ENCODE measurements at regions of chr2 and their contacts with region 1.

Region 1: GRCh38 chr2:20661067-20661980 is 5.6 kb upstream of the GDF7 start:
- DNase-seq: peak; percentile 78
- H3K4me3 Mint-ChIP-seq: no peak overlapping the region
- H3K27ac Mint-ChIP-seq: no peak overlapping the region
- H3K4me1 Mint-ChIP-seq: peaks cover 10% of the 10 kb centered on the region
- H3K27me3 Mint-ChIP-seq: peaks cover 52% of the 10 kb centered on the region

Region 2: DNA sequence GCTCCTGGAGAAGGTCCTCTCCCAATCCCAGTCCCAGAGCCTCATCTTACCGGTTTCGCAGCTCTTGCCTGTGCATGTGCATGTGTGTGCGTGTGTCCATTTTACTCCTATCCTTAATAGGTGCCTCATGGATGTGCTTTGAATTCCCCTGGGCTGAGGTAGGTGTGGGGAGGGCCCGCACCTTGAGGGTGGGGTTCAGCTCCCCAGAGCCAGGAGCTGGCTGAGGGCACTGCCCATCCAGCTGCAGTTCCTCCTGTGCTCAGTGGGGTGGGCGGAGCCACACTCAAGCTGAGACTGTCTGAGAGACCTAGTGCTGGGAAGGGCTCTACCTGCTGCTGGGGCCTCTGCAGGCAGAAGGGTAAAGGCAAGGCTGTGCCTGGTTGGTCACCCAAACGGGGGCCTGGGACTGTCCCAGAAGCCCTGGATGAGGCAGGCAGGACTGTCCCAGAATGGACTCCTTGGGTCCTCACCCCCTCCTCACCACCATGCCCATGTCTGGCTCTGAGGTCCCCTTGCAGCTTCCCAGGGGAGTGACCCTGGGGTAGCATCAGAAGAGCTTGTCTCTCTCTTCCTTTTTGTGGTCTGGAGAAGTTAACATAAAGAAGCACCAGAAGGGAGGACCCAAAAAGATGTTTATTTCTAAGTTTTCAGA is 14.5 kb after region 1 on chr2:
- CTCF ChIA-PET with region 1: interaction called, 47 read pairs
- POLR2A ChIA-PET with region 1: no interaction called
- intact Hi-C with region 1: no loop called
- DNase-seq: peak; percentile 33
- H3K4me3 Mint-ChIP-seq: no peak overlapping the region
- H3K27ac Mint-ChIP-seq: no peak overlapping the region
- H3K4me1 Mint-ChIP-seq: no peaks in the 10 kb centered on the region
- H3K27me3 Mint-ChIP-seq: peaks cover 16% of the 10 kb centered on the region

Region 3: DNA sequence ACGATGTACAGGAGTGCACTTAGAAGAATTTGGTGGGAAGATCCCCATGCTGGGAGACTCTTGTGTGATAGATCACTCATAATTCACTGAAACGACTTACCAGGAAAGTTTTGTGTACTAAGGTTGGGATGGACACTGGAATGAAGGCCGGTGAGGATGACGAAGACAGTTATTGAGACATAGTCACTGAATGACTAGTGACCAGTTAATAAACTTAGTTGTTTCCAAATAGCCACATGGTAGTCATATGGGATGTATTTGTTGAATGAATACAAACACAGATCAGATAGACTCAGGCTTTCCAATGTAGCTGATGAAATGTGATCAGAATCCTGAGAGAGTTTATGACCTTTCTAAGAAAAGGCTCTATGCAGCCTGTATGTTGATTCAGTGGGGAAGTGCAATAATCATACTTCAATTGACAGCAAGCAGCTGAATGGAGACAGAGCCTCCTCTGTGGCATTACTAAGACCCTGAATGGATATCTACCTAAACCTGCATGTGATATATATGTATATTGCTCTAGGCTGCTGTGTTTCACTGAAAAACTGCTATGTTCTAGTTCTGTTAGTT is 26.0 kb after region 1 on chr2:
- CTCF ChIA-PET with region 1: interaction called, 12 read pairs
- POLR2A ChIA-PET with region 1: no interaction called
- intact Hi-C with region 1: no loop called
- DNase-seq: no peak
- H3K4me3 Mint-ChIP-seq: no peak overlapping the region
- H3K27ac Mint-ChIP-seq: no peak overlapping the region
- H3K4me1 Mint-ChIP-seq: peaks cover 11% of the 10 kb centered on the region
- H3K27me3 Mint-ChIP-seq: no peaks in the 10 kb centered on the region

Region 4: DNA sequence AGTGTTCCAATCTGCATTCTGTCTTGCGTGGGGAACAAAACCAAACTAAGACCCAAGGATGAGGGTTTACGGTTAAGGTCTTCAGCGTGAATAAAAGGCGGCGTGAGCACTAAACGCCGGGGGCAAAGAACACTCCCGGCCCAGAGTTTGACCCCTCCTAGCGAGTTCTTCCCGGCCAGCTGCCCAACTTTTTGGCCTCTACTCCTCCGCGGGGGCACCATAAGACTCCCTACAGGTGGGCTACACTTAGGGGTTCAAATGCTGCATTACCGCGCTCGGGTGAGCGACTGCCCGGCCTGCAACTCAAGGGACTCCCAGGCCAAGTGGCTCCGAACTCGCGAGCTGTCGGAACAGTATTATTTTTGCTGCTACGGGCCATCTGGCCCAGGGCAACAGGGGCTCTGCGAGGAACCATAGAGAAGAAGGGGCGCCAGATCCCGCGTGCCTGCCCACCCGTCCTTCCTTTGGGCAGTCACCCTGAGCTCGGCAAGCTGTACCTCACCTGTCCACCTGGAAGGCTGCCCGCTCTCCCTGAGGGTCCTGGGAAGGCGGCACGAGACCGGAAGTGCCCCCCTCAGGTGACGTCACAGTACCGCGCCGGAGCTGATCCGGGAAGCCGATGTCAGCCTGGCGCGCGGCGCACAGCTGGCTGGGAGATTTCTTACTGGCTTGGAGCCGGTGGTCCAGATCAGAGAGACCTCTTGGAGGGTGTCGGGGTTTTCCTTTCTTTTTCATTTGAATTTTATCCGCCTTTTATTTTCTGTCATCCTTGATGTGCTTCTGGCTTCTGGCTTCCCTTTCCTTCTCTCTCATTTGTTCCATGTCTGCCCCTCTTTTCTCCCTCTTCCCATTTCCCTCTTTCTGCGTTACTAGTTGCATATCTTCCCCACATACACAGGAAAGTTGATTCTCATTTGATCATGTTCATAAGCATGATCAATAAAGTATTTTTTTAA is 161.5 kb after region 1 on chr2 and contains the start of gene LDAH:
- CTCF ChIA-PET with region 1: interaction called, 4 read pairs
- POLR2A ChIA-PET with region 1: no interaction called
- intact Hi-C with region 1: loop called (anchors 5 kb)
- DNase-seq: peak; percentile 90
- H3K4me3 Mint-ChIP-seq: peak within 1 kb of the TSS; percentile 96
- H3K27ac Mint-ChIP-seq: peak within 1 kb of the TSS; percentile 99
- H3K4me1 Mint-ChIP-seq: peaks cover 32% of the 10 kb centered on the region
- H3K27me3 Mint-ChIP-seq: no peaks in the 10 kb centered on the region
- total RNA-seq, gene LDAH: 35.2 to 38.7 TPM

Region 5: DNA sequence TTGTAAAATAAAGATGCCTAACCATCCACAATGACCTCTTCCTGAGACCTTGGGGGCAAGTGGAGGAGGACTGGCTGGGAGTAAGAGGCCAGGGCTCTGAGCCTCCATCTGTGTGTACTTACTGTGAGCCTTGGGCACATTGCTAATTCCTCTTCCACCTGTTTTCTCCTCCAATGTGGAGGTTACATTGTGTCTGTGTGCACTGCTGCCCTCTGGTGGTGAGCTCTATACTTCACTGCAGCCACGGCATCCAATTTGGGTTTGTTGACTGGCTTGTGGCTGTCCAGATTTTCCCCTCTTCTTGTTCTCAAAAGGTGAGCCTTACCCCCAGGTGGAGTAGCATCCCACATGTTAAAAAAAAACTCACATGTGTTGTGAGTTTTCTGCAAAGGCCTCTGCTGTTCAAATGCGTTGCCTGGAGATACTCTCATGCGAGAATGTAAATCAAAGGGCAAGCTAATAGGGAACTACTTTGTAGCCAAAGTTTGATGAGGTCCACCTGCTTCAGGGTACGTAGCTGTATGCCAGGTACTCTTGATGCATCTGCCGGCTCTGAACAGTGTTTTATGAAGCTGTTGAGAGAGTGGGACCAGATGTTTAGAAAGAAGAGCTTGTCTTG is 301.7 kb after region 1 on chr2:
- CTCF ChIA-PET with region 1: interaction called, 241 read pairs
- POLR2A ChIA-PET with region 1: no interaction called
- intact Hi-C with region 1: loop called (anchors 1 kb)
- DNase-seq: peak; percentile 78
- H3K4me3 Mint-ChIP-seq: no peak overlapping the region
- H3K27ac Mint-ChIP-seq: no peak overlapping the region
- H3K4me1 Mint-ChIP-seq: no peaks in the 10 kb centered on the region
- H3K27me3 Mint-ChIP-seq: peaks cover 10% of the 10 kb centered on the region

Region 6: GRCh38 chr2:21118302-21118920 is 457.1 kb after region 1 on chr2:
- CTCF ChIA-PET with region 1: interaction called, 4 read pairs
- POLR2A ChIA-PET with region 1: no interaction called
- intact Hi-C with region 1: loop called (anchors 1 kb)
- DNase-seq: peak; percentile 19
- H3K4me3 Mint-ChIP-seq: no peak overlapping the region
- H3K27ac Mint-ChIP-seq: no peak overlapping the region
- H3K4me1 Mint-ChIP-seq: no peaks in the 10 kb centered on the region
- H3K27me3 Mint-ChIP-seq: peaks cover 6% of the 10 kb centered on the region

Measured in activated CD4-positive, alpha-beta memory T cell treated with anti-CD3 and anti-CD28 coated beads for 36 hours (primary cell).